Activated CD4-positive, alpha-beta T cell treated with anti-CD3 and anti-CD28 coated beads, Interleukin-2, amount 10 ng/mL, durations not matched to agents 24 days and 14 days (primary cell): ENCODE measurements at regions of chr3 and their contacts with region 1.

Region 1: GRCh38 chr3:62558549-62559112 is 185.3 kb upstream of the FEZF2 start:
- DNase-seq: no peak
- H3K4me3 Mint-ChIP-seq: no peak overlapping the region
- H3K27ac Mint-ChIP-seq: no peak overlapping the region
- H3K4me1 Mint-ChIP-seq: no peaks in the 10 kb centered on the region
- H3K27me3 Mint-ChIP-seq: no peaks in the 10 kb centered on the region

Region 2: GRCh38 chr3:62149962-62150361 is 408.7 kb before region 1 on chr3:
- intact Hi-C with region 1: no loop called
- DNase-seq: no peak
- H3K4me3 Mint-ChIP-seq: no peak overlapping the region
- H3K27ac Mint-ChIP-seq: no peak overlapping the region
- H3K4me1 Mint-ChIP-seq: no peaks in the 10 kb centered on the region
- H3K27me3 Mint-ChIP-seq: no peaks in the 10 kb centered on the region

Region 3: DNA sequence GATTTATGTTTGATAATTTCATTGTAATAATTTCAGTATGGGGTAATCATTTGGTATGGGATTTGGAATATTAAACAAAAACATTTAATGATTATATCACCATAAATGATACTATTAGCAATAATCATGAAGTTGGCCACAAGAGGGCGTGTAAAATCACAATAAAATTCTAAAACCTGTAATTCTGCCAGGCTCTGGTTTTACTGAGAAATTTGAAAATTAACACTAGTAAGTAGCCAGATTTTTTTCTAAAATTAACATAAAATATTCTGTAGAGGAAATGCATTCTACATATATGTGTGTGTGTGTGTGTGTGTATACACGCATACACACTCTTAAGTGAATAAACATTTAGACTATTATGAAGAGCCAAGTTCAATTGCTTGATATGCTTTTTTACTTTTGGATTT is 225.8 kb before region 1 on chr3:
- intact Hi-C with region 1: loop called (anchors 10 kb)
- DNase-seq: no peak
- H3K4me3 Mint-ChIP-seq: no peak overlapping the region
- H3K27ac Mint-ChIP-seq: no peak overlapping the region
- H3K4me1 Mint-ChIP-seq: no peaks in the 10 kb centered on the region
- H3K27me3 Mint-ChIP-seq: no peaks in the 10 kb centered on the region

Region 4: DNA sequence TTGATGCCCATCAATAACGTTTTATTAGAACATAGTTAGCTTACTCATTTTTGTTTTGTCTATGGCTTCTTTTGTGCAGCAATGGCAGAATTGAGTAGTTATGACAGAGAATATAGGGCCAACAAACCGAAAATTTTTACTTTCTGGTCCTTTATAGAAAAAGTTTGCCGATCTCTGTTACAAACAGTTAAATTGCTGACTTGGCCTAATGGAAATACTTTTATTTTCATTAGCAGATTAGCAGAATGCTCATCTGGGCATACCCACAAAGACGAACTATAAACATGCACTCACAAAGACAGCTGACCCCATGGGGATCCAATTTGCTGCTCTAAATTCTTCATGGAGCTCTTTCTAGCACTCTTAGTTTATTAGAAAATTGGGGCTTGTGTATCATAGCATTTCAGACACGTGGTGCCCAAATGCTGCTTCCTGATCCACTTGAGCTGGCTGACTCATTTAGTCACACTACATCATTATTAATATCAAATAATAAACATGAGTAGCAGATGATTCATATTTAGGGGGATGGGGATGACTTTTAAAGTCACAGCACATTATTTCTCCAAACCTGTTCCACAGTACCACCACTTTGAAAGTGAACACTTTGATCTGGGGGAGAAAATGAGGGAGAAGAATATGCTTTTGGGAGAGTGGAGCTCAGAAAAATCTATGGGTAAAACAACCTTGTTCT is 42.8 kb after region 1 on chr3:
- intact Hi-C with region 1: no loop called
- DNase-seq: no peak
- H3K4me3 Mint-ChIP-seq: no peak overlapping the region
- H3K27ac Mint-ChIP-seq: no peak overlapping the region
- H3K4me1 Mint-ChIP-seq: no peaks in the 10 kb centered on the region
- H3K27me3 Mint-ChIP-seq: no peaks in the 10 kb centered on the region